CD8-positive, alpha-beta memory T cell (primary cell): ENCODE measurements at regions of chr6 and their contacts with region 1.

Region 1: GRCh38 chr6:2931970-2932748 is 29.1 kb upstream of the SERPINB9 start:
- DNase-seq: peak; percentile 70 to 88 (median 74)
- H3K4me3 ChIP-seq: peak overlapping the region; percentile 24
- H3K4me3 Mint-ChIP-seq: peak overlapping the region in 2 of 7 donors; percentile 29 to 41
- H3K27ac ChIP-seq: no peak overlapping the region
- H3K27ac Mint-ChIP-seq: peak overlapping the region in 6 of 8 donors; percentile 1 to 41 (median 27)
- H3K4me1 ChIP-seq: peaks cover 20% of the 10 kb centered on the region
- H3K4me1 Mint-ChIP-seq: peaks cover 22 to 26% (median 23%) of the 10 kb centered on the region in 3 donors
- H3K27me3 ChIP-seq: no peaks in the 10 kb centered on the region
- H3K27me3 Mint-ChIP-seq: no peaks in the 10 kb centered on the region

Region 2: DNA sequence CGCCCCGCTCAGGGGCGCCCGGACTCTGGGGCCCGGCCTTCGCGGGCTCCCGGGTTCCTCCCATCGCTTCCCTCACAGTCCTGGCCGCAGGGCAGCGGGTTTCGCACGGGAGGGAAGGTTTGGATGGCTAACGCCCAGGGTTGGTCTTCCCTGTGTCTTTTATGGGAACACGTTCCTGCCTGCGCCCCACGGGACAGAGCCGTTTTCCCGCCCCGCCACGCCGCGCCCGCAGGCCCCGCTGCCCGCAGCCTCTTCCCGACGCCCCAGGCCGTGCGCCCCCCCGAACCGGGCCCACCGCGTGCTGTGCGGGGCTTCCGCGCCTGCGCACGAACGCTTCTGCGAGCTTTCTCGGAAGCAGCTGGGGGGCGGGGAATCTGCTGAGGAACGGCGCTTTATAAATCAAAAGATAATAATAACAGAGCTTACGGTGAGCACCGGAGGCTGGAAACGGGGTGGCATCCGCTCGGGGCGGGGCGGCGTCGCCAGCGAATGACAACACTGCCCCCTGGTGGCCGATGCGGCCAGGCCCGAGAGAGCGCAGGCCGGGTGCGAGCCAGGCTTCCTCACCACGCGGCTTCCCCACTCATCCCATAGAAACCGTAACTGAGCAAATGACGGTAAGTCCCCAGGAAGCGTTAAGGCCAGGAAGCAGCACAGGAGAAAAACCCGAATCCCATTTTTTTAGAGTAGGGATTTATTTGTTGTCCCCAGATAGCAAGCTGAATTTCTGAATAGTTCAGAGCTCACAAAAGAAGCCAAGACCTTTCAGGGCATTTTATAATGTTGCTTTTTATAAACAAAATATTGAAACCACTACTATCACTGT is 297.8 kb before region 1 on chr6:
- CTCF ChIA-PET with region 1: no interaction called
- POLR2A ChIA-PET with region 1: no interaction called
- DNase-seq: peak; percentile 62 to 80 (median 72)
- H3K4me3 ChIP-seq: peak overlapping the region; percentile 26
- H3K4me3 Mint-ChIP-seq: peak overlapping the region; percentile 57 to 74 (median 66)
- H3K27ac ChIP-seq: no peak overlapping the region
- H3K27ac Mint-ChIP-seq: no peak overlapping the region
- H3K4me1 ChIP-seq: peaks cover 11% of the 10 kb centered on the region
- H3K4me1 Mint-ChIP-seq: peaks cover 0 to 9% (median 4%) of the 10 kb centered on the region in 3 donors
- H3K27me3 ChIP-seq: no peaks in the 10 kb centered on the region
- H3K27me3 Mint-ChIP-seq: peaks cover 12 to 32% of the 10 kb centered on the region in 2 donors

Region 3: GRCh38 chr6:2791124-2791974 is 140.8 kb before region 1 on chr6:
- CTCF ChIA-PET with region 1: interaction called, 28 read pairs
- POLR2A ChIA-PET with region 1: no interaction called
- DNase-seq: peak in 4 of 5 donors; percentile 17 to 70 (median 38)
- H3K4me3 ChIP-seq: no peak overlapping the region
- H3K4me3 Mint-ChIP-seq: peak overlapping the region in 4 of 7 donors; percentile 41 to 53 (median 42)
- H3K27ac ChIP-seq: no peak overlapping the region
- H3K27ac Mint-ChIP-seq: peak overlapping the region; percentile 30 to 91 (median 74)
- H3K4me1 ChIP-seq: peaks cover 23% of the 10 kb centered on the region
- H3K4me1 Mint-ChIP-seq: peaks cover 31 to 38% (median 32%) of the 10 kb centered on the region in 3 donors
- H3K27me3 ChIP-seq: no peaks in the 10 kb centered on the region
- H3K27me3 Mint-ChIP-seq: no peaks in the 10 kb centered on the region

Region 4: DNA sequence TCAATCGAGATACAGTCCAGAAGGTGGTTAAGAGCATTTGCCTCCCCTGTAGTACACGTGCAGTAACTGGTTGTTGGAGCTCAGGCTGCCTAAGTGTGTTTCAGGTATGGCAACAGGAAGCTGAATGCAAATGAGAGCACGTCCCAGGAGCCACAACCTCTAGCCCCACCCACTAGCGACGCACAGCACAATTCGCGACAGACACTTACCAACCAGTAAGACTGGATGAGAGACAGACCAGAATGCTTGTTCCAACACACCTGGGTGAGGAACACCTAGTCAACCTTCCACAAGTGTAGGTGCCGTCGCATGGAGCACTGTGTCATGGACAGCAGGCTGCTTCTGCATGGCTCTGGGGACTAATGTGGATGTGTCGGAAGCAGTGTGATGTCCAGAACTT is 83.3 kb before region 1 on chr6:
- CTCF ChIA-PET with region 1: interaction called, 196 read pairs
- POLR2A ChIA-PET with region 1: interaction called, 12 read pairs
- DNase-seq: peak; percentile 19 to 77 (median 55)
- H3K4me3 ChIP-seq: no peak overlapping the region
- H3K4me3 Mint-ChIP-seq: peak overlapping the region in 5 of 7 donors; percentile 4 to 62 (median 30)
- H3K27ac ChIP-seq: no peak overlapping the region
- H3K27ac Mint-ChIP-seq: peak overlapping the region in 7 of 8 donors; percentile 1 to 94 (median 89)
- H3K4me1 ChIP-seq: peaks cover 31% of the 10 kb centered on the region
- H3K4me1 Mint-ChIP-seq: peaks cover 32 to 44% (median 34%) of the 10 kb centered on the region in 3 donors
- H3K27me3 ChIP-seq: no peaks in the 10 kb centered on the region
- H3K27me3 Mint-ChIP-seq: no peaks in the 10 kb centered on the region

Region 5: DNA sequence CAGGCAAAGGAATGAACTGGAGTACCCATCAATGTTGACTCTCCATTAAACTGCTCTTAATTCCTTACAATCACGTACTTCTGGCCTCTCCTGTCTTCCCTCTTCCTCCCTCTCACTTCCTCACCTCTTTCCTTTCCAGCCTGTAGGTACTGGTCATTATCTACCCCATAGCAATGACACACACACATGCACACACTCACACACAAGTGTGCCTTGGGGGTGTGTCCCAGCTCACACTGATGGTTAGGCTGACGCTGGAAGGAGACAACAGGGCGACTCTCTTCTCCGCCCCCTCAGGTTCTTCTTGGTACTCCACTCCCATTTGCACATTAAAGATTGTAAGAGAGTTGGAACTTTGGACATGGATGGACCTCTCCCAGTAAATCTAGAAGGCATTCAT is 15.1 kb before region 1 on chr6:
- CTCF ChIA-PET with region 1: interaction called, 20 read pairs
- POLR2A ChIA-PET with region 1: no interaction called
- DNase-seq: no peak
- H3K4me3 ChIP-seq: no peak overlapping the region
- H3K4me3 Mint-ChIP-seq: no peak overlapping the region
- H3K27ac ChIP-seq: no peak overlapping the region
- H3K27ac Mint-ChIP-seq: peak overlapping the region in 1 of 8 donors; percentile 12
- H3K4me1 ChIP-seq: peaks cover 8% of the 10 kb centered on the region
- H3K4me1 Mint-ChIP-seq: peaks cover 19 to 29% (median 28%) of the 10 kb centered on the region in 3 donors
- H3K27me3 ChIP-seq: no peaks in the 10 kb centered on the region
- H3K27me3 Mint-ChIP-seq: no peaks in the 10 kb centered on the region

Region 6: DNA sequence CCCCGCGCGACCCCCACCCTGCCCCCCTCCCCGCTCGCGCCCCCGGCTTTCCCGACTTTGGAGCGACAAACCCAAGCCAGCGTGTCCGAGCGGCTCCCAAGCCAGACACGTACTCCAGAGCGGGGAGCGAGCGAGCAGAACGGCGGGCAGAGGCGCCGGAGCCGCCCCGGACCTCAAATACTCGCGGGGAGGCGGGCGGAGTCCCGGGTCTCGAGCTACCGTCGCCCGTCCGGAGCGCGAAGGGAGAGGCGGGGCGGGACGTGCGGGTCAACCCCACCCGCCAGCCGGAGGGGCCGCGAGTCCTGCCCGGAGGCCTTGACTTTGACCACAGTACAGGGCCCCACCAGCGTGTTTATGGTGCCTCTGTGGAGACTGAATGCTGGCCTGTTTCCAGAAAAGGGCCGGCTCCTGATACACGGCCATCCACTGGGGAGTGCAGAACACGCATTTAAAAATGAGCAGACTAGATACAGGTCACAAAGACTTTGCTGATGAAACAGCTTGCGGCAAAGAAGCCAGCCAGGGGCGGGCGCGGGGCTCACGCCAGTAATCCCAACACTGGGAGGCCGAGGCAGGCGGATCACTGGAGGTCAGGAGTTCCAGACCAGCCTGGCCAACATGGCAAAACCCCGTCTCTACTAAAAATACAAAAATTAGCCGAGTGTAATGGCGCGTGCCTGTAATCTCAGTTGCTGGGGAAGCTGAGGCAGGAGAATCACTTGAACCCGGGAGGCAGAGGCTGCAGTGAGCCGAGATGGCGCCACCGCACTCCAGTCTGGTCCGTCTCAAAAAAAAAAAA is 39.5 kb after region 1 on chr6 and contains the start of gene SERPINB6:
- CTCF ChIA-PET with region 1: interaction called, 9 read pairs
- POLR2A ChIA-PET with region 1: interaction called, 17 read pairs
- DNase-seq: peak; percentile 23 to 62 (median 39)
- H3K4me3 ChIP-seq: peak within 1 kb of the TSS; percentile 63
- H3K4me3 Mint-ChIP-seq: peak within 1 kb of the TSS; percentile 88 to 95 (median 92)
- H3K27ac ChIP-seq: peak within 1 kb of the TSS; percentile 81
- H3K27ac Mint-ChIP-seq: peak within 1 kb of the TSS; percentile 85 to 98 (median 92)
- H3K4me1 ChIP-seq: peaks cover 26% of the 10 kb centered on the region
- H3K4me1 Mint-ChIP-seq: peaks cover 42 to 70% (median 48%) of the 10 kb centered on the region in 3 donors
- H3K27me3 ChIP-seq: no peaks in the 10 kb centered on the region
- H3K27me3 Mint-ChIP-seq: peaks cover 0 to 6% of the 10 kb centered on the region in 2 donors
- total RNA-seq, gene SERPINB6: 62.1 to 66.0 TPM